BJ (cell line): ENCODE measurements at regions of chr5 and their contacts with region 1.

Region 1: DNA sequence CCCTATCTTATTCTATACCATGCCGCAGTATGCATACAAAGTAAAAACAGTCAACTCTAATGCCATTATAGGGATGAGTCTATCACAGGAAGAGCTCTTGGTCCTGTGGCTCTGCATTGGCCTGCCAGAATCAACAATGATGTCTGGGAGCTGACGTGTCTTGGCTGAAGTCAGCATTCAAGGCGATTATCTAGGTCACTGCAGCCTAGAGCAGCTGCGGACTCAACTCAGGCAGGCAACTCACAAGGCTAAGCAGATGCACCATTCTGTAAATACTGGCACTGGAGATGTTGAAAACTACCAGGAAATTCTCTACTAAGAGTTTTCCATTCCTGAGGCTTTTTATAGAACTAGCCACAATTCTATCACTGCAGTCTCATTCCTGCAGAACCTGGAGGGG is 13.3 kb downstream of the SPATA9 start:
- DNase-seq: peak; percentile 91
- H3K4me3 ChIP-seq: no peak overlapping the region
- H3K27me3 ChIP-seq: no peaks in the 10 kb centered on the region
- CTCF ChIP-seq: no peak

Region 2: DNA sequence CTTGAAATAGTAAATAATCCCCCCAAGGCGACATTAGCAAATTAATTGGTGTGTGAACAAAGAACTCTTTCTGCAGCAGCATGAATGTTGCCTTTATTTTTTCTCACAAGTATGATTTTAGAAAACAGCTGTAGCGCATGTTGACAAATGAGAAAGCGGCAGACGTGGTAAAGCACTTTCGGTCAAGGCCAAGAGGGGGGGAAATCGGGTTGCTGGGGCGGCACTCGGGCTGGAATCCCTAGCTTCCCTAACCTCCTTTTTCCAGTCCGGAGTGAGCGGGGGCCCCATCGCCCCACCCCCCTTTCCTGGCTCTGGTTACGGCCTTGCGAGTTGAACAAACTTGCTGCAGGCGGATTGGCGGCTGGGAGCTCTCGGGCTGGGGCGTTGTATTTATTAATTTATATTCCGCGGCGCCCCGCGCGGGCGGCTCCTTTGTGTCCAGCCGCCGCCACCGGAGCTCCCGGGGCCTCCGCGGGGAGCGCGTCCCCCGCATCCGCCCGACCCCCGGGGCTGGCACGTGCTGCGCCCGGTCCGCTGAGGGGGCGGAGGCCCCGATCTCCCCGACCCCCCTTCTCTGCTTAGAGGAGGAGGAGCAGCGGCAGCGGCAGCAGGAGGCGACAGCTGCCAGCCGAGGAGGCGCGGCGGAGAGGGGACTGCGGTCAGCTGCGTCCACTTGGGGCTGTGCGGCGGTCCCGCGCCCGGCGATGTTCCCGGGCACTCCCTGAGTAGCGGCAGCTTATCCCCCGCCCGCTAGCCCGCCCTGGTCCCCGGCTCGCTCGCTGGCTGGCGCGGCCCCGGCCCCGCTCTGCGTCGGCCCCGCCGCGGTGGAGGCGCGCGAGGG is 61.4 kb after region 1 on chr5 and contains the start of gene RHOBTB3:
- CTCF ChIA-PET with region 1: interaction called, 54 read pairs
- POLR2A ChIA-PET with region 1: interaction called, 10 read pairs
- DNase-seq: peak; percentile 78
- H3K4me3 ChIP-seq: peak within 1 kb of the TSS; percentile 100
- H3K27me3 ChIP-seq: no peaks in the 10 kb centered on the region
- CTCF ChIP-seq: peak; percentile 20; the same call in 1 of the 2 replicates
- polyA plus RNA-seq, gene RHOBTB3: 288 and 320 TPM in 2 replicates

Region 3: GRCh38 chr5:95808686-95809413 is 139.3 kb after region 1 on chr5:
- CTCF ChIA-PET with region 1: no interaction called
- POLR2A ChIA-PET with region 1: no interaction called
- DNase-seq: no peak
- H3K4me3 ChIP-seq: no peak overlapping the region
- H3K27me3 ChIP-seq: no peaks in the 10 kb centered on the region
- CTCF ChIP-seq: no peak

Region 4: GRCh38 chr5:96067894-96068614 is 398.5 kb after region 1 on chr5:
- CTCF ChIA-PET with region 1: no interaction called
- POLR2A ChIA-PET with region 1: no interaction called
- DNase-seq: peak; percentile 72
- H3K4me3 ChIP-seq: no peak overlapping the region
- H3K27me3 ChIP-seq: no peaks in the 10 kb centered on the region
- CTCF ChIP-seq: no peak